Activated CD8-positive, alpha-beta T cell treated with anti-CD3 and anti-CD28 coated beads, Interleukin-2, amount 10 ng/mL, durations not matched to agents 7 days and 5 days (primary cell): ENCODE measurements at regions of chr10 and their contacts with region 1.

Region 1: DNA sequence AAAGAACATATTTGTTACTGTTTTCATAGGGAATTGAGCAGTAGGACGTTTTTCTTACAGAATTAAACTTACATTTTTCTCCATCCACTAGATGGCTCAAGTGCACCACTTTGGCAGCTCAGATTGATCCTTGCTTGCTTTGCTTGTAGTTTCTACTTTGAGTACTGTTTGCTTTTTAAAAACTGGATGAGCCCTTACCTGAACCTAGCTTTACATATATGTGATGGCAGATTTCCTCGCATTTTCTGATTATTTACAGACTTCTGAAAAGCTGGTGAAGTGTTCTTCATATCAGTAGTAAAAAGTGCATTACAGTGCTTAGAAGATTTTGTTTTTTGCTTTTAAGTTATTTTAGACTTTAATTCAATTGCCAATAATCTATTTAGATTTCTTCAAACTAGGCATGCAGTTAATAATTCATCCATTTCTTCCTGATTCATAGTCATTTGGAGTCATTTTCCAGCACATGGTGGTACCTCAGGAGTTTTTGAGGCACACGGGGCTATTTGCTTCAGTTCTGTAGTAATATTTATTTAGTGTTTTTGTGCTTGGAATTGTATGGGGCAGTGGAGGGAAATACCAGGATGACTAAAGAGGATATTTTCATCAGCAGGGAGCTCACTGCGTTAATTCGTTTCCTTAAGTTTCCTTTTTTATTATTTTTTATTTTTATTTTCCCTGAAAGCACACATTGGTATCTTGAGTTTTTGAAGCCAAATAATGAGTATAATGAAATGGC is 57.3 kb downstream of the MAPK8 start:
- DNase-seq: peak; percentile 59
- ATAC-seq: no peak
- H3K4me3 Mint-ChIP-seq: no peak overlapping the region
- H3K27ac Mint-ChIP-seq: no peak overlapping the region
- H3K4me1 Mint-ChIP-seq: peaks cover 3% of the 10 kb centered on the region
- H3K27me3 Mint-ChIP-seq: no peaks in the 10 kb centered on the region

Region 2: GRCh38 chr10:48377751-48378535 is 14.2 kb after region 1 on chr10:
- CTCF ChIA-PET with region 1: interaction called, 14 read pairs
- POLR2A ChIA-PET with region 1: no interaction called
- DNase-seq: no peak
- ATAC-seq: no peak
- H3K4me3 Mint-ChIP-seq: no peak overlapping the region
- H3K27ac Mint-ChIP-seq: no peak overlapping the region
- H3K4me1 Mint-ChIP-seq: no peaks in the 10 kb centered on the region
- H3K27me3 Mint-ChIP-seq: no peaks in the 10 kb centered on the region

Region 3: DNA sequence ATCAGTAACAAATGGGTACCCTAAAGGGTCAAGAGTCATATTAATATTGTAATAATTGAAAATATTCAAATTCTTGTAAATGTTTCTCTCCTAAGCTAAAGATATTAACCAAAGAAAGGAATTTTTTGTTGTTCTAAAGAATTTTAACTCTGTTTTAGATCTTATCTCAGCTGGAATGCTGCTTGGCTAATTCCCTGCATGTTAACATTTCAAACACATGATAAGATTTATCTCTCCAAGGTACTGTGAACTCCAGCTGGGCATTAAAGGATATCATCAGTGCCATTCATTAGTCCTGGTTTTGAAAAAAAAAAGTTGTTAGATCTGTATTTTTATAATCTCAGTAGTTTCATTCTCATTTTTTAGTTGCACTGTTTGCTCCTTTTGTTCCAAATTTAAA is 19.6 kb after region 1 on chr10:
- CTCF ChIA-PET with region 1: interaction called, 14 read pairs
- POLR2A ChIA-PET with region 1: no interaction called
- DNase-seq: no peak
- ATAC-seq: no peak
- H3K4me3 Mint-ChIP-seq: no peak overlapping the region
- H3K27ac Mint-ChIP-seq: no peak overlapping the region
- H3K4me1 Mint-ChIP-seq: no peaks in the 10 kb centered on the region
- H3K27me3 Mint-ChIP-seq: no peaks in the 10 kb centered on the region

Region 4: GRCh38 chr10:48506147-48506917 is 142.5 kb after region 1 on chr10:
- CTCF ChIA-PET with region 1: interaction called, 15 read pairs
- POLR2A ChIA-PET with region 1: no interaction called
- DNase-seq: peak; percentile 45
- ATAC-seq: peak; percentile 51
- H3K4me3 Mint-ChIP-seq: no peak overlapping the region
- H3K27ac Mint-ChIP-seq: no peak overlapping the region
- H3K4me1 Mint-ChIP-seq: no peaks in the 10 kb centered on the region
- H3K27me3 Mint-ChIP-seq: peaks cover 2% of the 10 kb centered on the region

Region 5: DNA sequence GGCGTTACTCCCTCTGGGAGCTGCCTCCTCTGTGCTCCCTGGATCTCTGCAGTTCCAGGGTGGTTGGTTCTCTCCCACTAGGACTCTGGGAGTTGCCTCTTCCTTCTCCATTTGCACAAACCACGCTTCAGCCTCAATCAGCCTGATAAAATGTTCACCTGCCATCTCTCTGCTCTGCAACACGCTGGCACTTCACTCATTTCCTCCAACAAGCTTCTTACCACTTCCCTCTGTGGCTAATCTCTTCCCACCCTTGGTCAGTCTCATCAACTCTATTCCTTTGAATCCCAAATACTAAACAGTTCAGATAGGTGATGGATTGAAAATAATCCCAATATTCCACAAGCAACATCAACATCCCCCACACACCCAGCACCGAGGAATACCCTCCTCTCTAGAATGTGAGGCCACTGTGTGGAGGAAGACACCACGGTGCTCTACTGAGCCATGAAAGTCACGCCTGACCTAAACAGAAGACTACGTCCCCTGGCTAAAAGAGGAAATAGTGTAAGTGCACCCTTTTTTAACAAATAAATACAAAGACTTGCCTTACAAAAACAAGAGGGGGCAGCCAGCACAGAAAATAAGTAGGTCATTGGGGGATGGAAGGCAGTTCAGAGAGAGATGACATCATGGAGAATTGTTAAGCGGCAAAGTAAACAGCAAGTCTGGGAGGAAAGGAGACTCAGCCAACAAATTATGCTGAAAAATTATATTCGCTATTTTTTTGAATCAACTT is 772.0 kb after region 1 on chr10:
- CTCF ChIA-PET with region 1: no interaction called
- POLR2A ChIA-PET with region 1: no interaction called
- DNase-seq: no peak
- ATAC-seq: no peak
- H3K4me3 Mint-ChIP-seq: no peak overlapping the region
- H3K27ac Mint-ChIP-seq: no peak overlapping the region
- H3K4me1 Mint-ChIP-seq: peaks cover 3% of the 10 kb centered on the region
- H3K27me3 Mint-ChIP-seq: peaks cover 22% of the 10 kb centered on the region